CD14-positive monocyte (primary cell): ENCODE measurements at regions of chr15 and their contacts with region 1.

Region 1: DNA sequence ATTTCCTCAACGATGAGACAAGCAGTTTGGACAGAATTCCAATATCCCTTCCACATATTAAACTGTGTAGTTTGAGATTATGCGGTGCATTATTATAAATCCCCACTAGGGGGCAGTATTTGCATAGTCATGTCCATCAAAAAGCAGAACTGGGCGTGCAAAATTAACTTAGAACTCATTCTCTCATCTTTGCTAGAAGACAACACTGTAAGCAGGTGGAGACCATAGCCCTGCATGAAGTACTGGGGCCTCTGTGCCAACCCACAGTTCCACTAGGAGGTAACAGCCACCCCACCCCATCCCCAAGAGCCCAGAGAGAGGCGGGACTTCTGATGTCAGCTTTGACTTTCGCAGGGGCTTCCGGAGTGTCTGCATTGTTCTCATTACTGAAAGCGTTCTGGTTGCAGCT is 106.6 kb upstream of the TMC3 start:
- DNase-seq: peak; percentile 37 to 61 (median 45)
- H3K4me3 ChIP-seq: no peak overlapping the region
- H3K4me3 Mint-ChIP-seq: peak overlapping the region in 1 of 2 donors; percentile 21
- H3K27ac ChIP-seq: no peak overlapping the region
- H3K27ac Mint-ChIP-seq: no peak overlapping the region
- H3K4me1 ChIP-seq: no peaks in the 10 kb centered on the region
- H3K4me1 Mint-ChIP-seq: no peaks in the 10 kb centered on the region
- H3K27me3 ChIP-seq: no peaks in the 10 kb centered on the region
- H3K27me3 Mint-ChIP-seq: no peaks in the 10 kb centered on the region
- CTCF ChIP-seq: peak; percentile 90

Region 2: GRCh38 chr15:82046666-82047452 is 566.2 kb after region 1 on chr15:
- intact Hi-C with region 1: loop called in 1 of 2 experiments (anchors 2 kb)
- DNase-seq: peak; percentile 86 to 89 (median 88)
- H3K4me3 ChIP-seq: peak overlapping the region; percentile 80 to 85 (median 82)
- H3K4me3 Mint-ChIP-seq: peak overlapping the region; percentile 93
- H3K27ac ChIP-seq: peak overlapping the region; percentile 78 to 82
- H3K27ac Mint-ChIP-seq: peak overlapping the region; percentile 76 to 94 (median 90)
- H3K4me1 ChIP-seq: peaks cover 26 to 40% of the 10 kb centered on the region in 2 donors
- H3K4me1 Mint-ChIP-seq: peaks cover 22% of the 10 kb centered on the region
- H3K27me3 ChIP-seq: peaks cover 8 to 32% of the 10 kb centered on the region in 2 donors
- H3K27me3 Mint-ChIP-seq: peaks cover 27 to 42% (median 27%) of the 10 kb centered on the region in 3 donors
- CTCF ChIP-seq: peak; percentile 77

Region 3: GRCh38 chr15:82183121-82184033 is 702.7 kb after region 1 on chr15:
- intact Hi-C with region 1: loop called in 1 of 2 experiments (anchors 10 kb)
- DNase-seq: no peak
- H3K4me3 ChIP-seq: no peak overlapping the region
- H3K4me3 Mint-ChIP-seq: no peak overlapping the region
- H3K27ac ChIP-seq: no peak overlapping the region
- H3K27ac Mint-ChIP-seq: no peak overlapping the region
- H3K4me1 ChIP-seq: peaks cover 7 to 8% of the 10 kb centered on the region in 2 donors
- H3K4me1 Mint-ChIP-seq: peaks cover 6% of the 10 kb centered on the region
- H3K27me3 ChIP-seq: no peaks in the 10 kb centered on the region
- H3K27me3 Mint-ChIP-seq: no peaks in the 10 kb centered on the region
- CTCF ChIP-seq: no peak